A673 (cell line): ENCODE measurements at regions of chr9 and their contacts with region 1.

Region 1: DNA sequence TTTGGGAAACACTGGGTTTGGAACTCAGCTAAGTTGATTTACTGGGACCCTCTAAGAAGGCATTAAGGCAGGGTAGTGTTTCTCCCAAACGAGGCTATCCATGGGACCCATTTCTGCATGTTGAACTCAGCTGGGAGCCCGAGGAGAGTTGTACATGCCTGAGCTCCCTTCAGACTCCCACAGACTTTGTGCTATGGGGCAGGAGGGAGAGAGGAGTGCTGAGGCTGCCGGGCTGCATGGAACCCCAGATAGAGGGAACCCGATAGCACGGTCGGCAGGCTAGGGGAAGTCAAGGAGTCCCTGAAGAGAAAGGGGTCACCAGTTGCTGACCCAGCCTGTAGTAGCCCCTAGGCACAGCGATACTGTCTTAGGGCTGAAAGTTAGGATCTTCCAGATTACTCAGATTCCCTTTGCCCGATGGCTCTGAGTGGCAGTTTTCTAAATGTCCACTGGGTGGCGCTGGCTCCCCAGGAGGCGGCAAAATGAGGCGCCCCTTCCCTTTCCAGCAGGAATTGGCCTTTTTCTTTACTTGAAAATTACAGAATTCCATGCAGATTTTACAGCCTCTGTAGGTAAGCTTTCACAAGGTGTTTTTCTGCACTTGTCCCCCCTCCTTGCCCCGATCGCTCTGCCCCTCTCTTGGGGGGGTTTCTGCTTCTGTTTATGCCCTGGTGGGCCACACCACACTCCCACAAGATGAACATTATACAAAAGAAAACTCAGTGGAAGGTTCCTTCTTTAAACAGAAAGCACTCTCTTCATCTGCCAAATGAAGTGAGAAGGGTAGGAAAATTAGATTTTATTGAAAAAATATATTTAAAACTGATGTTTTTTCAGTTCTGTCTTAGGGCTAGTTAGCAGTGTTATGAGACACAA is 17.8 kb downstream of the NANS start:
- DNase-seq: peak; percentile 76
- H3K4me3 ChIP-seq: no peak overlapping the region
- H3K27ac ChIP-seq: peak overlapping the region; percentile 9
- H3K4me1 ChIP-seq: peaks cover 9% of the 10 kb centered on the region
- H3K27me3 ChIP-seq: no peaks in the 10 kb centered on the region
- CTCF ChIP-seq: peak; percentile 97

Region 2: GRCh38 chr9:98043915-98044314 is 30.4 kb before region 1 on chr9:
- CTCF ChIA-PET with region 1: interaction called, 11 read pairs
- POLR2A ChIA-PET with region 1: no interaction called
- intact Hi-C with region 1: no loop called
- DNase-seq: no peak
- H3K4me3 ChIP-seq: no peak overlapping the region
- H3K27ac ChIP-seq: no peak overlapping the region
- H3K4me1 ChIP-seq: no peaks in the 10 kb centered on the region
- H3K27me3 ChIP-seq: no peaks in the 10 kb centered on the region
- CTCF ChIP-seq: no peak

Region 3: DNA sequence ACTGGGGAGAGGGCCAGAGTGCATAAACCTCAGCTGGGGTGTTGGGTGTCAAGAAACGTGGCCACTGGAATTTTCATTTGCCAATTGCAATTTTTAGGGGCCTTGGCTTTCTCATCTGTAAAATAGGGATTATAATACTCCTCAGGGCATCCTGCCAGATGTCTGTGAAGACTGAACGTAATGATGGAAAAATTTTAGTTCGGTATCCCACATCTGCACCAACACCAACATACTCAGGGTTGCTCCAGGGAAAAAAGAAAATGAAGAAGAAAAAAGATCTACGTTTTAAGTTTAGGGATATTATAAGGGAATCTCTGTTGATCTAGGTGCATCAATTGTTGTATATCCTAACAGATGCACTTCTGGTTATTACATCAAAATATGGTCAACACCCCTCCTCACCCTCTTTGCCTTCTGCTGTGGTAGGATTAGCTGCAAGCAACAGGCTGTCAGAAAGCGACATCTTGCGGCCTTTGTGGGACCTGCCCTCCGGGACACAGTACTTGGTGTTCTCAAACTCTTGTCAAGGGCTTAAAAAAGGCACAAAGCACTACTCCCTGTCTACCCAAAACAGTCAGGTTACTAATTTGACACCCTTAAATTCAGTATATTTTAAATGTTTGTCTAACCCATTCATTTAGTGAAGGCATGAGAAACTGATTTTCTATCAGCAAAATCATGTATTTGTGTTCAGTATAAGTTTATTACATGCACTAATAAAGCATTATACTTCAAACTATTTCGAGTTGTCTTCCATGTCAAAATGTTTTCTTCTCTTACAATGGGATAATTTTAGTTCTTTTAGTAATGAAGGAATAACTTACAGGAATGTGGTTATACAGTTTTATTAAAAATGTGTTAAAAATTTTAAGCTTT is 189.4 kb after region 1 on chr9:
- CTCF ChIA-PET with region 1: interaction called, 3 read pairs
- POLR2A ChIA-PET with region 1: no interaction called
- intact Hi-C with region 1: loop called (anchors 1 kb)
- DNase-seq: peak; percentile 85
- H3K4me3 ChIP-seq: no peak overlapping the region
- H3K27ac ChIP-seq: no peak overlapping the region
- H3K4me1 ChIP-seq: no peaks in the 10 kb centered on the region
- H3K27me3 ChIP-seq: no peaks in the 10 kb centered on the region
- CTCF ChIP-seq: peak; percentile 96

Region 4: GRCh38 chr9:98775831-98776441 is 701.6 kb after region 1 on chr9:
- CTCF ChIA-PET with region 1: no interaction called
- POLR2A ChIA-PET with region 1: no interaction called
- intact Hi-C with region 1: loop called (anchors 10 kb)
- DNase-seq: peak; percentile 80
- H3K4me3 ChIP-seq: no peak overlapping the region
- H3K27ac ChIP-seq: no peak overlapping the region
- H3K4me1 ChIP-seq: no peaks in the 10 kb centered on the region
- H3K27me3 ChIP-seq: no peaks in the 10 kb centered on the region
- CTCF ChIP-seq: peak; percentile 81